Lower leg skin (tissue), 4 donors: ENCODE measurements at regions of chr11 and their contacts with region 1.

Region 1: GRCh38 chr11:61384271-61385242 is 7.8 kb upstream of the TMEM216 start:
- DNase-seq: no peak
- H3K4me3 ChIP-seq: no peak overlapping the region
- CTCF ChIP-seq: no peak
- POLR2A ChIP-seq: no peak

Region 2: DNA sequence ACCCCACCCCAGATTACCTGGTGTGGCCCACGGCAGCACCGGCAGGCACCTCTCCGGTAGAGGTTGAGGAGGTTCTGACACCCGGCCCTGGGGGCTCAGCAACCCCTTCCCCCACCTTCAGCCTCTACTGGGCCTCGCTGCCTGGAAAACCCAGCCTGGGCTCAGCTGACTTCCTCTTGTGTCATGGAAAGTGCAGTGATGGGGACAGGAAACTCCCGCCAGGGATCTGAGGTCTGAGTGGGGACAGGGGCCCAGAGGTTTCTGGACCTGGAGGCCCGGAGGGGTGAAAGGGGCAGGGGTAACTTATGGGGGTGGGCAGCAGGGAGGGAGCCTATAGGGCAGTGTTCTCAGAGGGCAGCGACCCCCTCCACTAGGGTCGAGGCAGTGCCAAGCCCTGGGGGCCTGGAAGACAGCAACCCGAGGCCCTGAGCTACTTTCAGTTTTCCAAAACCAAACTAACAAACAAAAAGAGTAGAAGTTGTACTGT is 292.2 kb before region 1 on chr11:
- intact Hi-C with region 1: no loop called
- DNase-seq: no peak
- H3K4me3 ChIP-seq: no peak overlapping the region
- CTCF ChIP-seq: no peak
- POLR2A ChIP-seq: no peak

Region 3: GRCh38 chr11:61254403-61255025 is 130.0 kb before region 1 on chr11:
- intact Hi-C with region 1: loop called (anchors 10 kb)
- DNase-seq: peak in 1 of 2 donors; percentile 26
- H3K4me3 ChIP-seq: no peak overlapping the region
- CTCF ChIP-seq: peak in 1 of 3 donors; percentile 46
- POLR2A ChIP-seq: no peak

Region 4: DNA sequence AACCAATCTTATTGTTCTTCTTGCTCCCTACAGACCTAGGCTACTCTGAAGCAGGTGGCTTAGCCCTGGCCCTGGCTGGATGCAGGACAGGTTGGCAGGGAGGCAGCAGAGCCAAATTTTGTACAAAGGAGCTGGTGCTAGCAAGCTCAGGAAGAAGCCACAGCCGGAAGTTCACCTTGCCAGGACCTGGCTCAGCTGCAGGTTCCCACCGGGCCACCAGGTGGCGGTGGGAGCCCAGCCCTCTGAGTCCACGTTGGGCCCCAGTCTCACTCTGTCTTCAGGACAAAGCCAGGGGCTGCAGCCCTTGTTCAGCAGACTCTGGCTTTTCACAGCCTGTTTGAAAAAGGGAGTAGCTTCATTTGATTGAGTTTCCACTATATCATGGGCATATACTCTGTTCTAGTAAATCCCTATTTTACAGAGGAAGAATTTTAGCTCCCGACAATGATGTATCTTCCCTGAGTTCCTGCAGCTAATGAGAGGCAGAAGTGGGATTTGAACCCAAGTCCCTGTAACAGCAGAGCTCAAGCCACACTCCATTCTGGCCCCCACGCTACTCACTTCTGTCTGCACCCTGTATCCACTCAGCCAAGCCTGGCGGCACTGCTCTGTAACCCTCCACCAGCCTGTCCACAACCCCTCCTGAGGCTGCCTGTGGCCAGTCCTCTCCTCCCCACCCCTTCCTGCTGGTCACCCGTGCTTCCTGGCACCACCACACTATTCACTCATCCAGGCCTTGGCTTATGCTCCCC is 48.2 kb before region 1 on chr11:
- intact Hi-C with region 1: loop called (anchors 5 kb)
- DNase-seq: peak; percentile 68 to 95
- H3K4me3 ChIP-seq: no peak overlapping the region
- CTCF ChIP-seq: peak in 1 of 3 donors; percentile 88
- POLR2A ChIP-seq: no peak